Psoas muscle (tissue), 8 donors: ENCODE measurements at regions of chr1 and their contacts with region 1.

Region 1: DNA sequence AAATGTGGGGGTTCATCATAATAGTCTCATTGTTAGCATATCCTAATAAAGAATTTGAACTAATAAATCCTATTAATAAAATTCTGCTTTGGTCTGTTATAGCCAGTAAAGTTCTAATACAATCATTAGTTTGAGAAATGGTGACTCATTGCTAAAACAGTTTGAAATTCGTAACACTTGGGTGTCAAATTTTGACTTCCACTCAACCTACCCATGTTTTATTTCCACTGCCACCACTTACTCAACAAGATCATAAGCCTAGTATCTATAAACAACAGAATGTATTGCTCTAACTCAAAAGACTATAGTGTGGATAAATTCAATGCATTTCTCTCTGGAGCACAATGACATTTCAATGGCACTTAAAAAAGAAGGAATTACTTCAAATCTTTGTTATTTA is 29.1 kb downstream of the LGALS8 start:
- DNase-seq: no peak
- ATAC-seq: no peak
- H3K4me3 ChIP-seq: no peak overlapping the region
- H3K27ac ChIP-seq: no peak overlapping the region
- H3K4me1 ChIP-seq: no peaks in the 10 kb centered on the region
- H3K27me3 ChIP-seq: no peaks in the 10 kb centered on the region
- CTCF ChIP-seq: no peak

Region 2: GRCh38 chr1:236590553-236591150 is 37.8 kb after region 1 on chr1:
- intact Hi-C with region 1: loop called (anchors 5 kb)
- DNase-seq: no peak
- ATAC-seq: no peak
- H3K4me3 ChIP-seq: no peak overlapping the region
- H3K27ac ChIP-seq: no peak overlapping the region
- H3K4me1 ChIP-seq: no peaks in the 10 kb centered on the region
- H3K27me3 ChIP-seq: no peaks in the 10 kb centered on the region
- CTCF ChIP-seq: no peak